HepG2 (cell line): ENCODE measurements at regions of chr9 and their contacts with region 1.

Region 1: GRCh38 chr9:121059998-121060636 is 10.0 kb upstream of the C5 start:
- DNase-seq: peak; percentile 56
- ATAC-seq: no peak
- H3K4me3 ChIP-seq: no peak overlapping the region
- H3K27ac ChIP-seq: no peak overlapping the region
- H3K4me1 ChIP-seq: peaks cover 18% of the 10 kb centered on the region
- H3K27me3 ChIP-seq: no peaks in the 10 kb centered on the region
- CTCF ChIP-seq: peak; percentile 75
- EP300 ChIP-seq: no peak
- POLR2A ChIP-seq: no peak
- RAD21 ChIP-seq: peak; percentile 45; the same call in 1 of the 2 replicates

Region 2: GRCh38 chr9:119334745-119335144 is 1725.4 kb before region 1 on chr9:
- CTCF ChIA-PET with region 1: no interaction called
- POLR2A ChIA-PET with region 1: no interaction called
- in situ Hi-C with region 1: no loop called
- intact Hi-C with region 1: no loop called
- DNase-seq: no peak
- ATAC-seq: no peak
- H3K4me3 ChIP-seq: no peak overlapping the region
- H3K27ac ChIP-seq: no peak overlapping the region
- H3K4me1 ChIP-seq: no peaks in the 10 kb centered on the region
- H3K27me3 ChIP-seq: no peaks in the 10 kb centered on the region
- CTCF ChIP-seq: no peak
- EP300 ChIP-seq: no peak
- POLR2A ChIP-seq: no peak
- RAD21 ChIP-seq: no peak

Region 3: GRCh38 chr9:120676767-120677402 is 383.2 kb before region 1 on chr9:
- CTCF ChIA-PET with region 1: no interaction called
- POLR2A ChIA-PET with region 1: no interaction called
- in situ Hi-C with region 1: no loop called
- intact Hi-C with region 1: no loop called
- DNase-seq: no peak
- ATAC-seq: no peak
- H3K4me3 ChIP-seq: no peak overlapping the region
- H3K27ac ChIP-seq: no peak overlapping the region
- H3K4me1 ChIP-seq: peaks cover 11% of the 10 kb centered on the region
- H3K27me3 ChIP-seq: no peaks in the 10 kb centered on the region
- CTCF ChIP-seq: no peak
- EP300 ChIP-seq: no peak
- POLR2A ChIP-seq: no peak
- RAD21 ChIP-seq: no peak

Region 4: DNA sequence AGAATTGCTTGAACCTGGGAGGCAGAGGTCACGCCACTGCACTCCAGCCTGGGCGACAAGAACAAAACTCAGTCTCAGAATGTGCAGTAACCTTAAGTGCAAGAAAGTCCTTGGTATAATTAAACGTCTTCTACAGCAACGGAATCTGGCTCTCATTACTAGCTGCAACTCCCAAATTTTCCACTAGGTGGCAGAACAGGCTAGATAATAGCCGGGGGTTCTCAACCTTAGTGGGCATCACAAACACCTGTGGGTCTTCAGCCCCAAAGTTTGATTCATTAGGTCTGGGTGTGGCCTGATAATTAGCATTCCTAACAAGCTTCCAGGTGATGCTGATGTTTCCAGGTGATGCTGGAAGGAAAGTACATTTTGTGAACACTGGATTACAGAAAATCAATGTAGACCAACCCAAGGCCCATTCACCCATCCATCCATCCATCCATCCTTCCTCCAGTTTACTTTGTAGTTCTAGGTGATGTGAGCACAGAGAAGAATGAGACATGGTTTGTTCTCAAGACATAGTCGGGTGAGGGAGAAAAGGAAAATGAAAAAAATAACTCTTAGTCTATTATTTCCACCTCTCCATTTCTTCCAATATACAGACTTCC is 304.2 kb before region 1 on chr9:
- CTCF ChIA-PET with region 1: no interaction called
- POLR2A ChIA-PET with region 1: no interaction called
- in situ Hi-C with region 1: no loop called
- intact Hi-C with region 1: loop called (anchors 10 kb)
- DNase-seq: peak; percentile 39
- ATAC-seq: peak; percentile 79
- H3K4me3 ChIP-seq: no peak overlapping the region
- H3K27ac ChIP-seq: no peak overlapping the region
- H3K4me1 ChIP-seq: no peaks in the 10 kb centered on the region
- H3K27me3 ChIP-seq: no peaks in the 10 kb centered on the region
- CTCF ChIP-seq: peak; percentile 90
- EP300 ChIP-seq: no peak
- POLR2A ChIP-seq: no peak
- RAD21 ChIP-seq: peak; percentile 90

Region 5: GRCh38 chr9:120985810-120986222 is 74.3 kb before region 1 on chr9:
- CTCF ChIA-PET with region 1: interaction called, 7 read pairs
- POLR2A ChIA-PET with region 1: no interaction called
- in situ Hi-C with region 1: no loop called
- intact Hi-C with region 1: loop called (anchors 1 kb)
- DNase-seq: peak; percentile 56
- ATAC-seq: peak; percentile 77
- H3K4me3 ChIP-seq: no peak overlapping the region
- H3K27ac ChIP-seq: no peak overlapping the region
- H3K4me1 ChIP-seq: peaks cover 20% of the 10 kb centered on the region
- H3K27me3 ChIP-seq: no peaks in the 10 kb centered on the region
- CTCF ChIP-seq: peak; percentile 71
- EP300 ChIP-seq: no peak
- POLR2A ChIP-seq: no peak
- RAD21 ChIP-seq: peak; percentile 24; the same call in 1 of the 2 replicates

Region 6: GRCh38 chr9:121023064-121023463 is 37.1 kb before region 1 on chr9:
- CTCF ChIA-PET with region 1: interaction called, 8 read pairs
- POLR2A ChIA-PET with region 1: no interaction called
- in situ Hi-C with region 1: no loop called
- intact Hi-C with region 1: loop called (anchors 1 kb)
- DNase-seq: peak; percentile 31
- ATAC-seq: peak; percentile 56
- H3K4me3 ChIP-seq: no peak overlapping the region
- H3K27ac ChIP-seq: no peak overlapping the region
- H3K4me1 ChIP-seq: peaks cover 14% of the 10 kb centered on the region
- H3K27me3 ChIP-seq: no peaks in the 10 kb centered on the region
- CTCF ChIP-seq: peak; percentile 48
- EP300 ChIP-seq: no peak
- POLR2A ChIP-seq: no peak
- RAD21 ChIP-seq: no peak

Region 7: DNA sequence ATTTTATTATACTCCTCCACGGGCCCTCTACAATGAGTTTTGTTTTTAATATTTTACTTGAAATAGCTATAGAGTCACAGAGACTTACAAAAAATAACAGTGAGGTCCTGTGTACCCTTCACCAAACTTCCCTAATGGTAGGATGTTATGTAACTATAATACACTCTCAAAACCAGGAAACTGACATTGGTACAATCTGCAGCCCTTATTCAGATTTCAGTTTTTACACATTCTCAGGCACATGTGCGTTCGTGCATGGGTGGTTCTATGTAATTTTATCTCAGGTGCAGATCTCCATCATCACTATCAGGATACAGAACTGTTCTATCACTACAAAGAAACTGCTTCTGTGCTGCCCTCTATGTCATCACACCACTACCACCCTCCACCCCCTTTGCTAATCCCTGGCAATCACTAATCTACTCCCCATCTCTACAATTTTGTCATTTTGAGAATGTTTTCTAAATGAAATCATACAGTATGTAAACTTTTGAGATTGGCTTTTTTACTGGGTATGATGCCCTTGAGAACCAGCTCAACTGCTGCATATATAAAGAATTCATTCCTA is 125.1 kb after region 1 on chr9:
- CTCF ChIA-PET with region 1: no interaction called
- POLR2A ChIA-PET with region 1: no interaction called
- in situ Hi-C with region 1: no loop called
- intact Hi-C with region 1: loop called (anchors 10 kb)
- DNase-seq: no peak
- ATAC-seq: no peak
- H3K4me3 ChIP-seq: no peak overlapping the region
- H3K27ac ChIP-seq: peak overlapping the region; percentile 84
- H3K4me1 ChIP-seq: peaks cover 84% of the 10 kb centered on the region
- H3K27me3 ChIP-seq: no peaks in the 10 kb centered on the region
- CTCF ChIP-seq: no peak
- EP300 ChIP-seq: no peak
- POLR2A ChIP-seq: no peak
- RAD21 ChIP-seq: no peak